ENCODE measurements at regions of chr12 and their contacts with region 1.

Region 1: DNA sequence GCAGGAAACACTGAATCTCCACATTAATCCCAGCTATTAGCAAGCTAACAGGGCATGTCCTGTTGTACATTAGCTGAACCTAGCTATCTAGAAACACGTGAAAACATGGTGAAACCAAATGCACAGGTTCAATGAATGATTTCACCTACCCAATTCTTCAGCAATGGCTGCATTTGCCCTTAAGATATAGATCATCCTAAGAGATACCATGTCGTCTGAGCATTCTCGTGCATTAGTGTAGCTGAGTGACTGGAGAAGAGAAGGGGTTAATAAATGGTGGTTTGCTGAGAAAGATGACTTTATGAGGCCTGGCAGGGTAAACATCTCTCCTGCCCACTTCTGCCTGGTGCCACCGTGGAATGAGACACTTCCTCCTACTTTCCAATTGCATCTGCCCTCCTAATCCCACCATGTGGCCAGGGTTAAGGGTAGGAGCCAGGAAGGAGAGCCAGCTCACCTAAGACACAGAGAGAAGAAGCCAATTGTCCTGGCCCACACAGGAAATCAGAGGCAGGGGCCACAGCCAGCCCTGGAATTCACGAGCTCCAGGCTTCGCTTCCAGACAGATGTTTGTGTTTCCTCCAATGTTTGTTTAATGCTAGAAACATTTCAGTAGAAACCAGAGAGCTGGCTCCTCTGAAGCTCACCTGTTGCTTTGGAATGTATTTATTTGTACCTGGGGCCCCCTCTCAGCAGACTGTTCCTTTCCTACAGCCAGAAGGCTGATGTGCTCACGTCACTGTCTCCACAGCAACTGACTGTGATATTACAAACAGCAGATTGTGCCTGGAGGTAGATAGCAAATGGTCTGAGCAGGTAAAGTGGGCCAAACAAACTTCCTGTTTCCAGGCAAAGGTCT is 126.0 kb upstream of the PARP11 start:
- DNase-seq: peak in 8 of 14 experiments; percentile 11 to 68 (median 30)
- ATAC-seq: peak; percentile 87
- H3K4me3 ChIP-seq: no peak overlapping the region
- H3K4me3 Mint-ChIP-seq: no peak overlapping the region
- H3K27ac ChIP-seq: no peak overlapping the region
- H3K27ac Mint-ChIP-seq: peak overlapping the region; percentile 69
- H3K4me1 ChIP-seq: peaks cover 19% of the 10 kb centered on the region
- H3K4me1 Mint-ChIP-seq: peaks cover 48% of the 10 kb centered on the region
- H3K27me3 ChIP-seq: no peaks in the 10 kb centered on the region
- H3K27me3 Mint-ChIP-seq: no peaks in the 10 kb centered on the region
- CTCF ChIP-seq: no peak

Region 2: DNA sequence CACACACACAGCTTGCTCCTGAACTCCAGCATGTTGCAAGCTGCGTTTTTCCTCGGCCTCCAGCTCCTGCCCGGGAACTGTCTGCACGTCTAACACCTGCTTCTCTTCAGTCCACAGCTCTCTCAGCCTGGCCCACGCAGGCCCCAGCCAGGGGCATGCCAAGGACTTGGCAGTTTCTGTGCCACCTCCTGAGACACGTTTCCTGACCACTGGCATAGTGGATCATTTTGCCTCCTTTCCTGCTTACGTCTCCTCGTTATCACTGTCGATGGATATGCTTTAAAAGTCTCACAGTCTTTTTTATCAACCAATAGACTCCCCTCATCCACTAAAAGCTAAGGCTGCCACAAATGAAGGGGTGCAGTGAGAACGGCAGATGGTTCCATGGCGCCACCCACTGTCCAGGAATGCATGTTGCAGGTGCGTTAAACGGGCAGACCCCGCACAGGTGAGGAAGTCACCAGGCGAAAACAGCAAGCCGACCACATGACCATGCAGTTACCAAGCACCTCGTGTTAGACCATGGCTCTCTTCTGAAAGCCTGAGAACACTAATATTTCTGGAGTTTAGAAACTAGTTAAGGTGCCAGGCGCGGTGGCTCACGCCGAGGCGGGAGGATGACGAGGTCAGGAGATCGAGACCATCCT is 1054.7 kb before region 1 on chr12:
- CTCF ChIA-PET with region 1: no interaction called
- POLR2A ChIA-PET with region 1: no interaction called
- intact Hi-C with region 1: no loop called
- DNase-seq: peak; percentile 19 to 64 (median 38)
- ATAC-seq: peak; percentile 61
- H3K4me3 ChIP-seq: no peak overlapping the region
- H3K4me3 Mint-ChIP-seq: no peak overlapping the region
- H3K27ac ChIP-seq: no peak overlapping the region
- H3K27ac Mint-ChIP-seq: no peak overlapping the region
- H3K4me1 ChIP-seq: peaks cover 3% of the 10 kb centered on the region
- H3K4me1 Mint-ChIP-seq: no peaks in the 10 kb centered on the region
- H3K27me3 ChIP-seq: peaks cover 0 to 4% of the 10 kb centered on the region in 2 experiments
- H3K27me3 Mint-ChIP-seq: peaks cover 4% of the 10 kb centered on the region
- CTCF ChIP-seq: peak; percentile 51

Region 3: DNA sequence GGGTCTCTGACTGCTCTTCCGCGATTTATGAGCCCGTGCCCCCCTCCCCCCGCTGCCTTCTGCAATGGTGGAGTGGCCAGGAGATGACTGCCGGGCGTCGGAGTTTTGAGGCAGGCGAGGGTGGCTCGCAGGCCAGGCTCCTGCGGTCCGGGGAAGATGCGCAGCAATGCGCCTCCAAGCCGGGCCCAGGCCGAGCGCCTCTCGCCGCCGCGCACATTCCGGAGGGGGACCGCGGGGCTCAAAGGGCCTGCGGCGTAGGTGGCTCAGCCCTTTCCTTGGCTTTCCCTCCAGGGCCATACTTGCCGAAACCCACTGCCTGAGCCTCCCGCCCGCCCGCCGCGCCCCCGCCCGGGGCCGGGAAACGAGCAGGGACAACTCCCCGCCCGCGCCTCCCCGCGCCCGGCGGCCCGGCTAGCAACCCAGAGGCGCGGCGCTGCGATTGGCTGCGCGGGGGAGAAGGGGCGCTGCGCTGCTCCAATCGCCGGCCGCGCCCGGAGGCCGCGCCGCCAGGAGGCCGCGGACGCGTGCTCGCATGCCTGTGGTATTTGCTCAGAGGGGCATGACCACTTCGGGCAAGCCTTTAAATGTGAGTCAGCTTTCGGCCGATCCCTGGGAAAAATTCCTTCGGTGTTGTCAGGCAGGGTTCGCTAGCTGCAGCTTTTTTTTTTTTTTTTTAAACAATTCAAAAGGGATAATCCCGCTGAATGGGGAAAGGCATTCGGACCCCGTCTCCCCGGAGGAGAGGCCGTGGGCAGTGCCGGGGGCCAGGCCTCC is 31.9 kb after region 1 on chr12:
- CTCF ChIA-PET with region 1: interaction called, 3 read pairs
- POLR2A ChIA-PET with region 1: interaction called, 5 read pairs
- intact Hi-C with region 1: loop called (anchors 2 to 5 kb)
- DNase-seq: peak; percentile 47 to 90 (median 70)
- ATAC-seq: peak; percentile 86
- H3K4me3 ChIP-seq: peak overlapping the region; percentile 60
- H3K4me3 Mint-ChIP-seq: peak overlapping the region; percentile 84
- H3K27ac ChIP-seq: peak overlapping the region in 1 of 2 donors; percentile 25
- H3K27ac Mint-ChIP-seq: peak overlapping the region; percentile 83
- H3K4me1 ChIP-seq: peaks cover 37% of the 10 kb centered on the region
- H3K4me1 Mint-ChIP-seq: peaks cover 47% of the 10 kb centered on the region
- H3K27me3 ChIP-seq: no peaks in the 10 kb centered on the region
- H3K27me3 Mint-ChIP-seq: no peaks in the 10 kb centered on the region
- CTCF ChIP-seq: no peak

Region 4: DNA sequence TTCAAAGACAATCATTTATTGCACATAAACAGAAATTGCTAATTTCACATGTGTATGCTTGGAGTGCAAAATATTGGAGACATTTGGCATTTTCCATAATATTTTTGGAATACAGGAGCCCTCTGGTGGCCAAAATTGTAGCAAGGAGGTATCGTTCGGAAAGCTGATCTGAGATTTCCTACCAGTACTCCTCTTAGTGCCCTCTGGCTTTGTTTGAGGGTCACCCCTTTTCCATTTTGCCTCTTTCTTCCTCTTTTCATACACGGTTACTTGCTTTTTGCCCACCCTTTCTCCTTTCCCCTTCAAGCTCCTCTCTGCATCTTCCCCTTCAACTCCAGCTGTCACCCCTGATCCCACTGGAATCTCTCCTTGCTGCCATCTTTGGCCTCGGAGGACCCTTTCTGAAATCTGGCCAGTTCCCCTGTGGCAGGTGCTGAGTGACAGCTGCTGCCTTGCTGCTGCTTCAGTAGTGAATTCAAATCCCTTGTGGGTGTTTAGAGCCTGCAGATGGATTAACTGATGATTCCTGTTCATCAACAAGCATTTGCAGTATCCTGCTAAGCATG is 38.6 kb after region 1 on chr12:
- CTCF ChIA-PET with region 1: interaction called, 4 read pairs
- POLR2A ChIA-PET with region 1: no interaction called
- intact Hi-C with region 1: loop called (anchors 2 to 5 kb)
- DNase-seq: peak in 5 of 14 experiments; percentile 18 to 61 (median 44)
- ATAC-seq: no peak
- H3K4me3 ChIP-seq: no peak overlapping the region
- H3K4me3 Mint-ChIP-seq: no peak overlapping the region
- H3K27ac ChIP-seq: no peak overlapping the region
- H3K27ac Mint-ChIP-seq: no peak overlapping the region
- H3K4me1 ChIP-seq: no peaks in the 10 kb centered on the region
- H3K4me1 Mint-ChIP-seq: peaks cover 4% of the 10 kb centered on the region
- H3K27me3 ChIP-seq: no peaks in the 10 kb centered on the region
- H3K27me3 Mint-ChIP-seq: no peaks in the 10 kb centered on the region
- CTCF ChIP-seq: peak; percentile 73

Region 5: GRCh38 chr12:4118017-4118510 is 118.9 kb after region 1 on chr12:
- CTCF ChIA-PET with region 1: no interaction called
- POLR2A ChIA-PET with region 1: no interaction called
- intact Hi-C with region 1: loop called in 1 of 2 experiments (anchors 10 kb)
- DNase-seq: peak in 4 of 14 experiments; percentile 25 to 74 (median 60)
- ATAC-seq: peak; percentile 66
- H3K4me3 ChIP-seq: no peak overlapping the region
- H3K4me3 Mint-ChIP-seq: peak overlapping the region; percentile 70
- H3K27ac ChIP-seq: no peak overlapping the region
- H3K27ac Mint-ChIP-seq: peak overlapping the region; percentile 43
- H3K4me1 ChIP-seq: peaks cover 48% of the 10 kb centered on the region
- H3K4me1 Mint-ChIP-seq: peaks cover 49% of the 10 kb centered on the region
- H3K27me3 ChIP-seq: no peaks in the 10 kb centered on the region
- H3K27me3 Mint-ChIP-seq: no peaks in the 10 kb centered on the region
- CTCF ChIP-seq: no peak

Region 6: DNA sequence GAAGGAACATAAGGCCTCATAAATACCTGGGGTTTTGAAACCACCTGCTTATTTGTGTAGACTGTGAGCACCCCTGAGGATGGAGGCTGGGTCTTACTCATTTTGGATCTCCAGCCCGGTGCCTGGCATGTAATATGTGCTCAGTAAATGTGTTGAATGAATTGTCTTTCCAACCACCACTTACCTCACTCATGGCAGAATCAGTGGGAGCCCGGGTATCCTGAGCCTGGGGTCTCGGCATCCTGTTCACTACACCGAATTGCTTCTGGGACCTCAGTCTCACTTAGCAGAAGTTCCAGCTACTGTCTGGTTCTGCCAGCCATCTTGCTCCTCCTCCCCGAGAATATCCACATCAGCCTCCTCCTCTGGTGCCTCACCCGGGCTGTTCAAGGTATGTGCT is 231.3 kb after region 1 on chr12:
- CTCF ChIA-PET with region 1: no interaction called
- POLR2A ChIA-PET with region 1: no interaction called
- intact Hi-C with region 1: no loop called
- DNase-seq: no peak
- ATAC-seq: no peak
- H3K4me3 ChIP-seq: no peak overlapping the region
- H3K4me3 Mint-ChIP-seq: no peak overlapping the region
- H3K27ac ChIP-seq: no peak overlapping the region
- H3K27ac Mint-ChIP-seq: no peak overlapping the region
- H3K4me1 ChIP-seq: no peaks in the 10 kb centered on the region
- H3K4me1 Mint-ChIP-seq: no peaks in the 10 kb centered on the region
- H3K27me3 ChIP-seq: no peaks in the 10 kb centered on the region
- H3K27me3 Mint-ChIP-seq: no peaks in the 10 kb centered on the region
- CTCF ChIP-seq: no peak